Panc1 (cell line): ENCODE measurements at regions of chr5 and their contacts with region 1.

Region 1: DNA sequence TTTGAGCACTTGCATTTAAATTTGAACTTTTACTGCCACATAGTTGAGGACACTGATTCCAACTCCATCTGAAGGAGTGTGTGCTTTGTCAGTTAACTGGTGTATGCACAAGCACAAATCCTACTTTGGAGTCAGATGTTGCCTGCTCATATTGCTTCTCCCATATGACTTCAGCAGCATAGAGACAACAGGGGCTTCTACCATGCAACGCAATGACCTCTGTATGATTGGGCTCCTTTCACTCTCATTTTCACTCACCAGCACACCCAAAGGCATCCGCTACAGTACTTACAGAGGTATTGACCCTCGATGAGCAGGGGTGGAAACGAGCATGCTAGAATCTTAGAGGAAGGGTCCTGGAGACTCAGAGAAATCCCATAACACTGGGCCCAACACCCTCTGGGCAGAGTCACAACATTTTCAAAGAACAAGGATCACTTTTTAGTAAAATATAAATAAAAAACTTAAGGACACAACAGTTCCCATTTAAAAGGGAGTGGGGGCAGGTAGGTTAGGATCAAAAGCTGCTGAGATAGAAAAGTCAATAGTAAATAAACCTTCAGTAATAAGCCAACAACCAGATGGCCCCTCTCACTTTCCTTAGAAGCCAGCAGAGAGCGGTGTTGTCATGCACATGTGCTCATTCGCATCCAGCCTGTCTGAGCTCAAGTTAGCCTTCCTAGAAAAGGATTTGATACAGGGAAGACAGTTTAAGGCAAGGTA is 203.8 kb downstream of the SNCAIP start:
- DNase-seq: peak; percentile 45
- ATAC-seq: peak; percentile 98
- H3K4me3 ChIP-seq: peak overlapping the region; percentile 27 to 32; a peak in 3 of 4 replicates
- H3K27ac ChIP-seq: no peak overlapping the region
- H3K4me1 ChIP-seq: no peaks in the 10 kb centered on the region; the same call in 1 of the 2 replicates
- H3K27me3 ChIP-seq: peaks cover 2% of the 10 kb centered on the region; the same call in 1 of the 2 replicates
- CTCF ChIP-seq: peak; percentile 83

Region 2: DNA sequence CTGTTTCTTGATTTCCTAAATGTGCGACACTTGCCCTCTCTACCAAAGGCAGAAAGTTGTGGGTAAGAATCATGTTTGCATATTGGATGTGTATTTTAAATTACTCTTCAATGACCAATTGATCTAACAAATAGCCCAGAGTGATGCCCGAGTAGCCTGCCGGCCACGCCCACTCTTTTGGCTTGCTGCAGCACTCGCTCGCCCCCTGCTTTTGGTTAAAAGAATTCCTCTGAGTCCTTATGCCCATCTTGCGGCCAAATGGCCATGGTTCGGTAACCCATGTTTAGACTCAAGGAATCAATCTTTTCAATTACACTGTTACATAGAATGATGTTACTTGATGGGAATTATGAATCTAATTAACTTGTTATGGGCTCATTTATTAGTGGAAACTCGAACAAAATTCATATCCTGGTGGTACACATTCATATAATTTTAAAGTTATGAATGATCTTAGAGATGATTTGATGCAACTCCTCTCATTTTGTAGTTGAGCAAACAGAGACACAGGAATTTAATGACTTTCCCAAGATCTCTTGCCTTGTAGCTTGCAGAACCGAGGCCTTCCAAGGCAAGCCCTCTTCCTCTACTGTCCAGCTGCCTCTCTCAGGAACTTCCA is 484.2 kb after region 1 on chr5:
- CTCF ChIA-PET with region 1: no interaction called
- POLR2A ChIA-PET with region 1: no interaction called
- in situ Hi-C with region 1: no loop called
- intact Hi-C with region 1: loop called (anchors 10 kb)
- DNase-seq: peak; percentile 17
- ATAC-seq: peak; percentile 78
- H3K4me3 ChIP-seq: no peak overlapping the region
- H3K27ac ChIP-seq: no peak overlapping the region
- H3K4me1 ChIP-seq: no peaks in the 10 kb centered on the region
- H3K27me3 ChIP-seq: no peaks in the 10 kb centered on the region
- CTCF ChIP-seq: peak; percentile 84

Region 3: DNA sequence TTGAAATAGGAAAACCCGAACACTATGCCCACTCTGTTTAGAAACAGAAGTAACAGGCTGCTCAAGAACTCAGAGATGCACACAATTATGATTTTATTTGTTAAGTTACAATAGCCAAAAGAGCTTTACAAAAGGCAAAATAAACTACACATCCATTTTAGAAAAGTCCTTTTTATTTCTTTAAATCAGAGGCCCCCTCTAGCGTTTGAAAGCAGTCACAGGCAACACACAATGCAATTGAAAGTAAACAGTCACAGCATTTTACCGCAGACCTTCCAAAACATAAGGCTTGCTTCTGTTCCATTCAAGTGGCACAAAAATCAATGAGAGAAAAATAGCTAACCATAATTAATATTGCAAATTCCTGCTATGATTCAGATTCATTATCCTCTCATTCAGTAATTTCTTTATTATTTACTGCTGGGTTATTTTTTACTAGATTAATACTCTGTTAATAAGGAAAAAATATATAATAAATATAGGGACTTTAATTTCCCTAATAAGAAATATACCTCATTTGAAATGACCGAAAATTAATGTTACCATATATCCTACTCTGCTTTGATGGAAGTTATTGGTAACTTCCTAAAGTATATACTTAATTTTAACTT is 829.1 kb after region 1 on chr5:
- CTCF ChIA-PET with region 1: interaction called, 3 read pairs
- POLR2A ChIA-PET with region 1: no interaction called
- in situ Hi-C with region 1: no loop called
- intact Hi-C with region 1: loop called (anchors 5 kb)
- DNase-seq: peak; percentile 18
- ATAC-seq: no peak
- H3K4me3 ChIP-seq: no peak overlapping the region
- H3K27ac ChIP-seq: no peak overlapping the region
- H3K4me1 ChIP-seq: no peaks in the 10 kb centered on the region
- H3K27me3 ChIP-seq: no peaks in the 10 kb centered on the region; the same call in 1 of the 2 replicates
- CTCF ChIP-seq: peak; percentile 68; the same call in 1 of the 2 replicates

Region 4: GRCh38 chr5:123367739-123368138 is 851.9 kb after region 1 on chr5:
- CTCF ChIA-PET with region 1: no interaction called
- POLR2A ChIA-PET with region 1: no interaction called
- in situ Hi-C with region 1: no loop called
- intact Hi-C with region 1: loop called (anchors 5 kb)
- DNase-seq: no peak
- ATAC-seq: no peak
- H3K4me3 ChIP-seq: no peak overlapping the region
- H3K27ac ChIP-seq: no peak overlapping the region
- H3K4me1 ChIP-seq: no peaks in the 10 kb centered on the region
- H3K27me3 ChIP-seq: no peaks in the 10 kb centered on the region
- CTCF ChIP-seq: peak; percentile 36; the same call in 1 of the 2 replicates